Endothelial cell of umbilical vein (primary cell): ENCODE measurements at regions of chr5 and their contacts with region 1.

Region 1: DNA sequence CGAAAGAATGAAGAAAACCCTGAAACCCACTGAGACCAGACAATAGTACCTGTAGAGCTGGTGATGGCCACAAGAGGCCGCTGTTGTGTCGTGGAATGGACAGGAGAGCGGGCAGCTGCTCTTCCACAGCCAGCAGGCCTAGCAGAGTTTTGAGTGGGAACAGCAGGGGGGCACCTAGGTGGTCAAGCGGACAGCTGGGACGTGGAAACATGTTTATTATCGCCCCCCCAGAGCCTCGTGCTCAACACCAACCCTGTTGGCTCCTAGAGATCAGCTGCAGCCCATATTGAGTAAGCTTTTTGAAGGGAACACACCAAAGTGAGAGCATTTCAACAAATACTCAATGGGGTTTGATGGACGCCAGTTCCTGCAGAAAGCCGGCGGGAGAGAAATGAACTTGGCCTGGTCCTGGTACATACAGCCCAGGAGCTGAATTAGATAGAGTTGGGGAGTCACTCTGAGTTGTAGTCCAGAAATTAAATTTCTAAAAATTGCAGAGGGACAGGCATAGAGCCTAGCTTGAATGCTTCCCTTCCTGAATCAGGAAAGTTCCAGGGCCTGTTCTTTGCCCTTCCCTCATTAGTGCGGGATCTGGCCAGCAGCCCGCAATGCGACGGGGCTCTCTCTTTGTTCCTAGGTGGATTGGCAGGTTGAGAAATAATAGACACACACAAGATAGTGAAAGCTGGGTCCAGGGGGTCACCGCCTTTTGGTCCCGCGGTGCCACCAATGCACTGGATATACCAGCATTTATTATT is 33.8 kb downstream of the MFAP3 start:
- DNase-seq: peak; percentile 82
- H3K4me3 ChIP-seq: no peak overlapping the region
- H3K27ac ChIP-seq: no peak overlapping the region
- H3K4me1 ChIP-seq: no peaks in the 10 kb centered on the region
- H3K27me3 ChIP-seq: peaks cover 0 to 1% of the 10 kb centered on the region in 2 experiments
- CTCF ChIP-seq: peak; percentile 84 to 92
- POLR2A ChIP-seq: no peak

Region 2: DNA sequence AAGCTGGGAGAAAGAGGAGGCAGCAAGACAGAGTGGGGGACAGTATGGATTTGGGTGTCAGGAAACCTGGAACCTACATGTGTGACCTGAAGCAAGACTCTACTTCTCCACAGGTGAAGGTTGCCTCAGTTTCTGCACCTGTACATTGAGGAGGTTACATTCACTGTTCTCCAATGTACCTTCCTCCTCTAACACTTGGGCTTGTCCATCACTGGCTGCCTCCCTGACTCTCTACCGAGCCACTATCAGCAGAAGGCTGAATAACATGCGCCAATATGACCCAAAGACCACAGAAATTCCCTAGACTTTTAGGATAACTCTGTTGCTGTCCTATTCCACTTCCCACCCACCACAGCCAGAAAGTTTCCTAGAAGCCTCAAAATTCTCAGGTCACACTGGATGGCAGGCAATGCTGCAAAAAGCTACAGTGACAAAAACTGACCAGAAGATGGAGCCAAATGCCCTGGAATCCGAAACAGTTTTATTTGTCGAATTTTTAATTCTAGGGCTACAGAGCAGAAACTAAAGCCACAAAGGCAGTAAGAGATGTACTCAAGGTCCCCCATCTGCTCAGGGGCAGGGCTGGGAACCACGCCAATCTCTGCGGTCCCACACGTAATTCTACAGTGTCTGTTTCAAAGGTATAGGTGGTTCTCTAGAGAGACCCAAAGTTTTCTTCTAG is 98.3 kb before region 1 on chr5:
- CTCF ChIA-PET with region 1: interaction called, 51 read pairs
- POLR2A ChIA-PET with region 1: no interaction called
- dilution Hi-C with region 1: no loop called
- intact Hi-C with region 1: loop called (anchors 1 kb)
- DNase-seq: peak; percentile 53
- H3K4me3 ChIP-seq: no peak overlapping the region
- H3K27ac ChIP-seq: no peak overlapping the region
- H3K4me1 ChIP-seq: no peaks in the 10 kb centered on the region
- H3K27me3 ChIP-seq: peaks cover 5 to 15% of the 10 kb centered on the region in 2 experiments
- CTCF ChIP-seq: peak; percentile 65 to 74
- POLR2A ChIP-seq: no peak

Region 3: GRCh38 chr5:154179846-154180710 is 107.5 kb after region 1 on chr5:
- CTCF ChIA-PET with region 1: interaction called, 75 read pairs
- POLR2A ChIA-PET with region 1: no interaction called
- dilution Hi-C with region 1: no loop called
- intact Hi-C with region 1: loop called (anchors 1 kb)
- DNase-seq: peak; percentile 64
- H3K4me3 ChIP-seq: no peak overlapping the region
- H3K27ac ChIP-seq: no peak overlapping the region
- H3K4me1 ChIP-seq: peaks cover 9% of the 10 kb centered on the region
- H3K27me3 ChIP-seq: peaks cover 15 to 24% of the 10 kb centered on the region in 2 experiments
- CTCF ChIP-seq: peak; percentile 76 to 80
- POLR2A ChIP-seq: no peak

Region 4: DNA sequence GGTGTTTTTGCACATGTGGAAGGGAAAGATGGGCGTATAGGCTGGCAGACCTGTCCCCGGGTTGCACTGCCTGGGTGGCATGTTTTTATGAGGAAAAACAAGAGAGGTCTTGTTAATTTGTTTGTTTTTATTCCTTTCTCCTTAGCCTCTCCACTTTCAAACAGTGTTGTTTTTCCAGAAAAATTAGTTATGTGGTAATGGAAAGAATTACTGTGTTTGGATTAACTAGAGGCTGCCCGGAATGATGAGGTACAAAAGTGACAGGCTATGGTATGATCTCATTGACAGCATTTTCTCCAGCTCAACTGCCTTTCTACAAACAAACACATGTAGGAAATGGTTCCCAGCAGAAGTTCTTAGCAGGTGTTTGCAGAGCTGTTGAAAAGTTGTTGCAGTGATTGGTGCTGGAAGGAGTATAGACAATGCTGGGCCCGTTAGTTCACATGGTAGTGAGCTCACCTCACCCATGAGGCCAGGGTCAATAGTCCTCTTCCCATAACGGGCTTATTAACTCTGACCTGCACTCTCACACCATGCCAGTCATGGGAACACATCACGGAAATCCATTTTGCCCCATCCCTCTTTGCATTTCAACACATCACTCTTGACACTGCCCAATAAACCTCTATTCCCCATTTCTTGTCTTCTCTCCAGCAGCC is 261.9 kb after region 1 on chr5:
- CTCF ChIA-PET with region 1: no interaction called
- POLR2A ChIA-PET with region 1: no interaction called
- dilution Hi-C with region 1: no loop called
- intact Hi-C with region 1: no loop called
- DNase-seq: peak; percentile 22
- H3K4me3 ChIP-seq: no peak overlapping the region
- H3K27ac ChIP-seq: no peak overlapping the region
- H3K4me1 ChIP-seq: peaks cover 5% of the 10 kb centered on the region
- H3K27me3 ChIP-seq: no peaks in the 10 kb centered on the region
- CTCF ChIP-seq: no peak
- POLR2A ChIP-seq: no peak

Region 5: GRCh38 chr5:154397652-154398406 is 325.2 kb after region 1 on chr5:
- CTCF ChIA-PET with region 1: interaction called, 175 read pairs
- POLR2A ChIA-PET with region 1: no interaction called
- dilution Hi-C with region 1: no loop called
- intact Hi-C with region 1: no loop called
- DNase-seq: peak; percentile 63
- H3K4me3 ChIP-seq: no peak overlapping the region
- H3K27ac ChIP-seq: no peak overlapping the region
- H3K4me1 ChIP-seq: peaks cover 10% of the 10 kb centered on the region
- H3K27me3 ChIP-seq: no peaks in the 10 kb centered on the region
- CTCF ChIP-seq: peak in 1 of 2 donors; percentile 53
- POLR2A ChIP-seq: no peak

Region 6: GRCh38 chr5:154445422-154446182 is 373.0 kb after region 1 on chr5 and contains the start of gene SAP30L:
- CTCF ChIA-PET with region 1: interaction called, 7 read pairs
- POLR2A ChIA-PET with region 1: no interaction called
- dilution Hi-C with region 1: no loop called
- intact Hi-C with region 1: loop called (anchors 1 kb)
- DNase-seq: peak; percentile 97
- H3K4me3 ChIP-seq: peak within 1 kb of the TSS; percentile 82 to 98 (median 93)
- H3K27ac ChIP-seq: peak within 1 kb of the TSS; percentile 24
- H3K4me1 ChIP-seq: peaks cover 16% of the 10 kb centered on the region
- H3K27me3 ChIP-seq: no peaks in the 10 kb centered on the region
- CTCF ChIP-seq: no peak
- POLR2A ChIP-seq: peak; percentile 50
- total RNA-seq, gene SAP30L: 37.6 and 37.8 TPM in 2 replicates

Region 7: GRCh38 chr5:154610321-154611154 is 537.9 kb after region 1 on chr5:
- CTCF ChIA-PET with region 1: interaction called, 6 read pairs
- POLR2A ChIA-PET with region 1: no interaction called
- dilution Hi-C with region 1: no loop called
- intact Hi-C with region 1: loop called (anchors 1 kb)
- DNase-seq: peak; percentile 62
- H3K4me3 ChIP-seq: peak overlapping the region in 2 of 3 experiments; percentile 19 to 20
- H3K27ac ChIP-seq: no peak overlapping the region
- H3K4me1 ChIP-seq: peaks cover 4% of the 10 kb centered on the region
- H3K27me3 ChIP-seq: peaks cover 22 to 39% of the 10 kb centered on the region in 2 experiments
- CTCF ChIP-seq: peak; percentile 83 to 91
- POLR2A ChIP-seq: no peak